CD4-positive, alpha-beta memory T cell (primary cell): ENCODE measurements at regions of chr11 and their contacts with region 1.

Region 1: GRCh38 chr11:35158701-35159510 is 19.9 kb downstream of the CD44 start:
- DNase-seq: peak in 1 of 5 donors; percentile 22
- H3K4me3 ChIP-seq: peak overlapping the region in 1 of 2 donors; percentile 8
- H3K4me3 Mint-ChIP-seq: peak overlapping the region; percentile 51 to 87 (median 70)
- H3K27ac ChIP-seq: peak overlapping the region; percentile 96
- H3K27ac Mint-ChIP-seq: peak overlapping the region; percentile 89 to 100 (median 100)
- H3K4me1 ChIP-seq: peaks cover 100% of the 10 kb centered on the region
- H3K4me1 Mint-ChIP-seq: peaks cover 93 to 100% (median 97%) of the 10 kb centered on the region in 4 donors
- H3K27me3 ChIP-seq: no peaks in the 10 kb centered on the region
- H3K27me3 Mint-ChIP-seq: no peaks in the 10 kb centered on the region

Region 2: DNA sequence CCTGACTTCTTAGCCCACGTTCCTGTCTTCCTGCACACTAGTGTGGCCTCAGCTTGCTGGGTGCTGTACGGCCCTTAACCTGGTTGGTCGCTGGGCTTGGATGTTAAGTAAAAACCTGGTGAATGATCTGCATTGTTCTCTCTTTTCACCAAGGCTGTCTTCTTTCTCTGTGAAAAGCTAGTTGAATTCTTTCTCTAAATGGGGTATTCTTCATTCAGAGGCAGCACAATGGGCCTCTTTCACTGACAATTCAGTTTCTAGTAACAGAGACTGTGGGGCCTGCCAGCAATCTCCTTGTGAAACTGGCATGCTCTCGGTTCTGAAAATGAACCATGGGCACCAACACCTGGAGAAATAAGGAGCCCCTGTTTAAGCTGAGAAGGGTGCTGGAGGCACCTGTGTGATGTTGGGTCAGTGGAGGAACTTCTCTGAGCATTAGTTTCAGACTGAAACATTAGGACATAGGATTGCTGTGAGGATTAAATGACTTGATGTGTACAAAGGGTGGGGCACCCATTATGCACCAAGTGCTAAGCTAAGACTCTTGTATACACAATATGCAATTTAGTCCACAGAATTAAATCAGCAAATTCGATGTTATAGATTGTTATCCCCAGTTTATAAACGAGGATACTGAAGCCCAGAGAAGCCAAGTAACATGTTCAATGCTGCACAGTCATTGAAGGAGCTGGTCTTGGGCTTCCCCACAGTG is 612.2 kb before region 1 on chr11:
- CTCF ChIA-PET with region 1: no interaction called
- POLR2A ChIA-PET with region 1: no interaction called
- intact Hi-C with region 1: no loop called
- DNase-seq: no peak
- H3K4me3 ChIP-seq: no peak overlapping the region
- H3K4me3 Mint-ChIP-seq: no peak overlapping the region
- H3K27ac ChIP-seq: no peak overlapping the region
- H3K27ac Mint-ChIP-seq: no peak overlapping the region
- H3K4me1 ChIP-seq: no peaks in the 10 kb centered on the region
- H3K4me1 Mint-ChIP-seq: no peaks in the 10 kb centered on the region
- H3K27me3 ChIP-seq: no peaks in the 10 kb centered on the region
- H3K27me3 Mint-ChIP-seq: peaks cover 13 to 16% of the 10 kb centered on the region in 2 donors

Region 3: GRCh38 chr11:35144136-35144741 is 14.7 kb before region 1 on chr11:
- CTCF ChIA-PET with region 1: interaction called, 151 read pairs
- POLR2A ChIA-PET with region 1: interaction called, 1,106 read pairs
- intact Hi-C with region 1: loop called (anchors 1 kb)
- DNase-seq: peak; percentile 67 to 90 (median 76)
- H3K4me3 ChIP-seq: peak overlapping the region; percentile 55 to 59
- H3K4me3 Mint-ChIP-seq: peak overlapping the region; percentile 83 to 99 (median 98)
- H3K27ac ChIP-seq: peak overlapping the region; percentile 73
- H3K27ac Mint-ChIP-seq: peak overlapping the region; percentile 93 to 100 (median 95)
- H3K4me1 ChIP-seq: peaks cover 72% of the 10 kb centered on the region
- H3K4me1 Mint-ChIP-seq: peaks cover 60 to 88% (median 70%) of the 10 kb centered on the region in 4 donors
- H3K27me3 ChIP-seq: no peaks in the 10 kb centered on the region
- H3K27me3 Mint-ChIP-seq: no peaks in the 10 kb centered on the region

Region 4: GRCh38 chr11:35288817-35289541 is 130.1 kb after region 1 on chr11:
- CTCF ChIA-PET with region 1: no interaction called
- POLR2A ChIA-PET with region 1: no interaction called
- intact Hi-C with region 1: no loop called
- DNase-seq: no peak
- H3K4me3 ChIP-seq: no peak overlapping the region
- H3K4me3 Mint-ChIP-seq: no peak overlapping the region
- H3K27ac ChIP-seq: no peak overlapping the region
- H3K27ac Mint-ChIP-seq: no peak overlapping the region
- H3K4me1 ChIP-seq: peaks cover 8% of the 10 kb centered on the region
- H3K4me1 Mint-ChIP-seq: peaks cover 4 to 17% (median 12%) of the 10 kb centered on the region in 4 donors
- H3K27me3 ChIP-seq: no peaks in the 10 kb centered on the region
- H3K27me3 Mint-ChIP-seq: no peaks in the 10 kb centered on the region